Activated CD4-positive, alpha-beta T cell treated with anti-CD3 and anti-CD28 coated beads for 36 hours (primary cell): ENCODE measurements at regions of chr2 and their contacts with region 1.

Region 1: GRCh38 chr2:127526149-127527000 is at the start of gene IWS1:
- DNase-seq: peak; percentile 96
- ATAC-seq: peak; percentile 94
- H3K4me3 Mint-ChIP-seq: peak within 1 kb of the TSS; percentile 98
- H3K27ac Mint-ChIP-seq: peak within 1 kb of the TSS; percentile 98
- H3K4me1 Mint-ChIP-seq: peaks cover 29% of the 10 kb centered on the region
- H3K27me3 Mint-ChIP-seq: no peaks in the 10 kb centered on the region
- total RNA-seq, gene IWS1: 49.5 to 55.0 TPM

Region 2: GRCh38 chr2:127185093-127185492 is 341.3 kb before region 1 on chr2:
- CTCF ChIA-PET with region 1: no interaction called
- POLR2A ChIA-PET with region 1: no interaction called
- intact Hi-C with region 1: no loop called
- DNase-seq: peak; percentile 46
- ATAC-seq: no peak
- H3K4me3 Mint-ChIP-seq: no peak overlapping the region
- H3K27ac Mint-ChIP-seq: no peak overlapping the region
- H3K4me1 Mint-ChIP-seq: peaks cover 5% of the 10 kb centered on the region
- H3K27me3 Mint-ChIP-seq: peaks cover 12% of the 10 kb centered on the region

Region 3: DNA sequence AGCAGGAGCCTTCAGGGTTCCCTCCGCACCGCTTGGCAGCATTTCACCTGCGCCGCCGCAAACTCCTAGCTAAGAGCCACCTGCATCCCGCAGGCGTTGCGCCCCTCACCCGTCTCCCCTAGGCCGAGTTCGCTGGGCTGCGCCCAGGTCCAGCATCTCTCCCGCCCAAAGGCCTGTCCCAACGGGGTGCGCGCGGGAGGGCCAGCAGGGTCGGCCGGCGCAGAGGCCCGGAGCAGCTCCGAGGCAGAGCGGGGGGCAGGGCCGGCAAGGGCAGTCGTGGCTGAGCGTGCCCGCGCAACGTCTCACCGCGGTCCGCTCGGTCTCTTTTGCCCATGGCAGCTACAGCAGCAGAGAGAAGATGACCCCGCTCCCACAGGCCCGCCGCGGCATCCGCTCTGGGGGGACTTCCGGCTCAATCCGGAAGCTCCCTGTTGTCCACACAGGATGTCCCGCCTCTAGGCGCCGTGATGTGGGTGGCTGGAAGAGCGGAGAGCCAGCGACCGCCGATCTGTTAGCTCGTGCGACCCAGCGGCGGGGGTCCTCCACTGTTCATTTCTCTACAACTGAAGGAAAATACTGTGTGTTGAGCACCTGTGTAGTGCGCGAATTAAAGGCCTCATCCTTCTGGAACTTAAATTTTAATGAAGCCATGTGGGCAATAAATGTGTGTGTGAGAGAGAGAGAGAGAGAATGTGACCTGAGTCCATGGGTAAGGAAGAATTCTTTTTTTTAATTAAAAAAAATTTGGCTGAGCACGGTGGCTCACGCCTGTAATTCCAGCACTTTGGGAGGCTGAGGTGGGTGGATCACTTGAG is 232.4 kb before region 1 on chr2 and contains the start of gene ERCC3:
- CTCF ChIA-PET with region 1: no interaction called
- POLR2A ChIA-PET with region 1: interaction called, 3 read pairs
- intact Hi-C with region 1: loop called in 1 of 2 experiments (anchors 1 kb)
- DNase-seq: peak; percentile 90
- ATAC-seq: peak; percentile 98
- H3K4me3 Mint-ChIP-seq: peak within 1 kb of the TSS; percentile 98
- H3K27ac Mint-ChIP-seq: peak within 1 kb of the TSS; percentile 100
- H3K4me1 Mint-ChIP-seq: peaks cover 20% of the 10 kb centered on the region
- H3K27me3 Mint-ChIP-seq: no peaks in the 10 kb centered on the region
- total RNA-seq, gene ERCC3: 49.5 to 49.8 TPM

Region 4: GRCh38 chr2:127511917-127512316 is 14.5 kb before region 1 on chr2:
- CTCF ChIA-PET with region 1: interaction called, 6 read pairs
- POLR2A ChIA-PET with region 1: interaction called, 3 read pairs
- intact Hi-C with region 1: loop called in 1 of 2 experiments (anchors 2 kb)
- DNase-seq: no peak
- ATAC-seq: no peak
- H3K4me3 Mint-ChIP-seq: no peak overlapping the region
- H3K27ac Mint-ChIP-seq: no peak overlapping the region
- H3K4me1 Mint-ChIP-seq: peaks cover 75% of the 10 kb centered on the region
- H3K27me3 Mint-ChIP-seq: no peaks in the 10 kb centered on the region

Region 5: DNA sequence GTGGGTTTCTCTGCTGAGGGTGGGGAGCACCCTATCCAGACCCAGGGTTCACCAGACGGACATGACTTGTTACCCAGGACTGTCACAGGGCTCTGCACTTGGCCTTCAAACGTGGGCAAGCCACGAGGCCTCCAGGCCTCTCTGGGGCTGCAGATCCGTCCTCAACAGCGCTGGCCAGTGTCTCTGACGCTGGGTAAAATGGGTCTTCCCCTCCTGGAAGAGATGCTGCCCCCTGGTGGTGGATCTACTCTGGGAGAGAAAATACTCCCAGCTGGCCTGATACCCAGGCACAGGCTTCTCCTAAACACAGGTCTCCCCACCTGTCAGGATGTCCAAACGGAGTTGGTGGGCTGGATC is 123.3 kb after region 1 on chr2:
- CTCF ChIA-PET with region 1: no interaction called
- POLR2A ChIA-PET with region 1: no interaction called
- intact Hi-C with region 1: loop called in 1 of 2 experiments (anchors 5 kb)
- DNase-seq: peak; percentile 92
- ATAC-seq: peak; percentile 85
- H3K4me3 Mint-ChIP-seq: no peak overlapping the region
- H3K27ac Mint-ChIP-seq: no peak overlapping the region
- H3K4me1 Mint-ChIP-seq: peaks cover 10% of the 10 kb centered on the region
- H3K27me3 Mint-ChIP-seq: no peaks in the 10 kb centered on the region

Region 6: DNA sequence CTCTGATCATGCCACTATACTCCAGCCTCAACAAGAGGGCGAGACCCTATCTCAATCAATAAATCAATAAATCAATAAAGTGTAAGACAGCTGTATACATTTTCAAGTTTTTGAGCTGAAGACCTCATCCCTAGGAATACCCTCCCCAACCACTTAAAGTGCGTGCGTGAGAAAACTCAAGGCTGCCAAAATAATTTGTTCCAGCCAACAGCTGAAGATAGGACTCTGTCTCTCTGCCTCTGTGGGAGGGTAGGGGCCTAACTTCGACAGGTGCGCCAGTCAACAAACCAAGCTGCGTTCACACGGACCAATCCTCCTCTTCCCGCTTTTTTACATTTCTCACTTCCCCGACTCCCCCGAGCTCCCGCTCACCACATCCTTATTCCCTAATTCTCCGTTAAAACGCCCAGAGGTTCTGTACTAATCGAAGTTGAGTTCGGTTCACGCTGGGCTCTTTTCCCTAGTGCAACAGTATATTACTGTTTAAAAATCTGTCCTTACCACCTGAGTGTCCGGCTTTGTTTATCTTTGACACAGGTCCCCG is 331.0 kb after region 1 on chr2:
- CTCF ChIA-PET with region 1: no interaction called
- POLR2A ChIA-PET with region 1: no interaction called
- intact Hi-C with region 1: loop called in 1 of 2 experiments (anchors 1 kb)
- DNase-seq: peak; percentile 39
- ATAC-seq: no peak
- H3K4me3 Mint-ChIP-seq: peak overlapping the region; percentile 97
- H3K27ac Mint-ChIP-seq: peak overlapping the region; percentile 96
- H3K4me1 Mint-ChIP-seq: peaks cover 50% of the 10 kb centered on the region
- H3K27me3 Mint-ChIP-seq: no peaks in the 10 kb centered on the region

Region 7: DNA sequence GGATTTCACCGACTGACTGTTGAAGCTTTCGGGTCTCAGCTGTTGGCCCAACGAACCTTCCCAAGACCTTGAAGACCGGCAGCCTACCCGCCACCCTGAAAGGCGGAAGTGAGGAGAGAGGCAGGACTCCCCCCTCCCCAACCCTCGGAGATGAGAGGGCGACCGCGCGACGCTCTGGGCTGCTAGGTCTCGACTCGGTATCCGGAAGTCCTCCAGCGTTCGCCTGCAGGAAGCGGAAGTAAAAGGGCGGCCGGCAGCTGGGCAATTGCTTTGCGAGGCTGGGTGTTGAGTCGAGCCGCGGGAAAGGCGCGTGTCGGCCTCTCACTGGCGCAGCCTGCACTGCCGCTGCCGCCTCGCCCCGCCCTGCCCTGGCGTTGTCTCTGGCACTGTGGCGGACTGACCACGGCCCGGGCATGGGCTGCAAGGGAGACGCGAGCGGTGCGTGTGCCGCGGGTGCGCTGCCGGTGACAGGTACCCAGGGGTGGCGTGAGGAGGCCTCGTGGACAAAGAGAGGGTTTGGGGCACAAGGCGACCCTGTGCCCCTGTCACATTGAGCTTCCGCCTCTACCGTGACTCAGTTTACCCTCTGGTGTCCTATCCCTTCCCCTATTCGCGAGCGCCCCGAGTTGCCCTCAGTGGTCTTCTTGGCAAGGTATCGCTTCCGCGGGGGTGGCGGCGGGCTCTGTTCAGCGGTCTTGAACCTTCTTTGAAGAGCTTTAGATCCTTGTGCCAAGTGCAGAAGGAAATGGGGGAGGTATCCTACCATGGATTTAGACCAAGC is 564.8 kb after region 1 on chr2 and contains the start of gene UGGT1:
- CTCF ChIA-PET with region 1: no interaction called
- POLR2A ChIA-PET with region 1: no interaction called
- intact Hi-C with region 1: loop called in 1 of 2 experiments (anchors 2 kb)
- DNase-seq: peak; percentile 96
- ATAC-seq: peak; percentile 95
- H3K4me3 Mint-ChIP-seq: peak within 1 kb of the TSS; percentile 90
- H3K27ac Mint-ChIP-seq: peak within 1 kb of the TSS; percentile 93
- H3K4me1 Mint-ChIP-seq: peaks cover 44% of the 10 kb centered on the region
- H3K27me3 Mint-ChIP-seq: no peaks in the 10 kb centered on the region
- total RNA-seq, gene UGGT1: 50.0 to 67.2 TPM